OCI-LY7 (cell line): ENCODE measurements at regions of chr1 and their contacts with region 1.

Region 1: DNA sequence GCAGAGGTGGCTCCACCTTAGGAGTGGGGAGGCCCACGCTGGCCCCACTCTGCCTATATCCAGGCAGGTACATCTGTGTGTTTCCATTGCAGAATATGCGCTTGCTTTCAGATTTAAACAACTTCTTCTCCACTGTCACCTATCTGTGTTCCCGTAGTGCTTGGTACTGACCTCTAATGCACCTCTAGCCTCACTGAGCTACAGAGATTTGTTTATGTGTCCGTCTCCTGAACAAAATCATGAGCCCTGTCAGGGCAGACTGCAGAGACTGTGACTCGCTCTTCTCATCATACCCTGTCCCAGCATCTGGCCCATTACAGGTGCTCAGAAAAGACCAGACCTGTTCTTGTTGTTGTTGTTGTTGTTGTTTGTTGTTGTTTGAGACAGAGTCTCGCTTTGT is 14.5 kb upstream of the LRRC38 start:
- DNase-seq: no peak
- H3K4me3 ChIP-seq: no peak overlapping the region
- H3K27ac ChIP-seq: no peak overlapping the region
- H3K4me1 ChIP-seq: no peaks in the 10 kb centered on the region
- CTCF ChIP-seq: no peak

Region 2: DNA sequence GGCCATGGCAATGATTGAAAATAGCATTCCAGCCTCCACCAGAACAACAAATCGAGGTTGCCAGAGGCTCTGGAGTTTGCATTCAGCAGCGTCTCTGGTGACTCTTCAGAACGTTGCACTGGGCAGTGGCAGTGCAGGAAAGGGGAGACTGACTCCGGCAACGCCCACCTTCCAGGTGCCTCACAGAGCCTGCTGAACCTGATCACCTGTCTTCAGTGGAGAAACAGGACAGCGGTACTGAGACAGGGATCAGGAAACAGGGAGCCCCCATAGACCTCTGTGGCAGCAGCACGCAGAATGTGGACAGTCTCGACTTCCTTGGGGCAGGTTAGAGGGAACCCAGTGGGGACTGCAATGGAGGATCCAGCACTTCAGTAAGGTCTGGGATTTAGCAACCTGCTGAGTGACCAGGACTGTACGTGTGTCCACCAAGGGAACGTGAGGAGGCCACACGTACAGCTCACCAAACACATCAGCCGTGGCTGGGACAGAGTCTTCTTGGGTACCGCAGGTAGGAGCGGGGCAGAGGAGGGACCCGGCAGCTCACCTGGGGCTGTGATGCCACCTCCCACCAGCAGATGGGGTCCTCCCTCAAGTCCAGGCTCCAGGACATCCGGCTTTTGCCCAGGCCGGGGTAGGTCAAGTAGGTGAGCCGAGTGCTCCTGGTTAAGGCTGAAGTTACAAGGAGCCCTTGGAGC is 300.3 kb after region 1 on chr1:
- CTCF ChIA-PET with region 1: no interaction called
- POLR2A ChIA-PET with region 1: no interaction called
- intact Hi-C with region 1: no loop called
- DNase-seq: peak; percentile 69
- H3K4me3 ChIP-seq: peak overlapping the region; percentile 54
- H3K27ac ChIP-seq: no peak overlapping the region
- H3K4me1 ChIP-seq: peaks cover 4% of the 10 kb centered on the region
- CTCF ChIP-seq: peak; percentile 79

Region 3: DNA sequence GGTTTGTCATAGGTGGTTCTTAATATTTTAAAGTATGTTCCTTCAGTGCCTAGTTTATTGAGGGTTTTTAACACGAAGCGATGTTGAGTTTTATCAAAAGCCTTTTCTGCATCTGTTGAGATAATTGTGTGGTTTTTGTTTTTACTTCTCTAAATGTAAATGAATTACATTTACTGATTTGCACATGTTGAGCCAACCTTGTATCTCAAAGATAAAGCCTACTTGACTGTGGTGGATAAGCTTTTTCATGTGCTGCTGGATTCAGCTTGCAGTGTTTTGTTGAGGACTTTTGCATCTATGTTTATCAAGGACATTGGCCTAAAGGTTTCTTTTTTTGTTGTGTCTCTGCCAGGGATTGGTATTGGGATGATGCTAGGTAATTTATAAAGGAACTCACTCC is 314.2 kb after region 1 on chr1:
- CTCF ChIA-PET with region 1: no interaction called
- POLR2A ChIA-PET with region 1: interaction called, 12 read pairs
- intact Hi-C with region 1: no loop called
- DNase-seq: no peak
- H3K4me3 ChIP-seq: no peak overlapping the region
- H3K27ac ChIP-seq: no peak overlapping the region
- H3K4me1 ChIP-seq: no peaks in the 10 kb centered on the region
- CTCF ChIP-seq: no peak